AG04449 (cell line): ENCODE measurements at regions of chr7 and their contacts with region 1.

Region 1: DNA sequence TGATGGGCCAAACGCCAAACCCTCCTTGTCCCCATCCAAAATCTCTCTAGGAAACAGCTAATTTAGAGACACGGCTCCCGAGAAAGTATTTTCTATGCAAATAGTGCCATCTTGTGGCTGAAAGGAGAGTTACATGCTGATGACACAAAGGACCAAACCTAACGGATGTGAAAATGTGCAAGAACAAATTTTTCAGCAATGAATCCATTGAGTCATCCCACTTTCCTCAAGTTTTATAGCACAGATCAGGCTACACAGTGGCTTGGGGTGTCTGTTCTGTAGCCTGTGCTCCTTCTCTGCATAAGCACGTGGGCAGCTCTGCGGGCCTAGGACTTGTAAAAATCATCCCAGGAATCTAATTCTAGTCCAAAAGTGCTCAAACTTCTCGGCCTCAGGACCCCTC is 154.8 kb upstream of the PRR15 start:
- DNase-seq: peak; percentile 9
- H3K4me3 ChIP-seq: no peak overlapping the region
- CTCF ChIP-seq: peak; percentile 67

Region 2: DNA sequence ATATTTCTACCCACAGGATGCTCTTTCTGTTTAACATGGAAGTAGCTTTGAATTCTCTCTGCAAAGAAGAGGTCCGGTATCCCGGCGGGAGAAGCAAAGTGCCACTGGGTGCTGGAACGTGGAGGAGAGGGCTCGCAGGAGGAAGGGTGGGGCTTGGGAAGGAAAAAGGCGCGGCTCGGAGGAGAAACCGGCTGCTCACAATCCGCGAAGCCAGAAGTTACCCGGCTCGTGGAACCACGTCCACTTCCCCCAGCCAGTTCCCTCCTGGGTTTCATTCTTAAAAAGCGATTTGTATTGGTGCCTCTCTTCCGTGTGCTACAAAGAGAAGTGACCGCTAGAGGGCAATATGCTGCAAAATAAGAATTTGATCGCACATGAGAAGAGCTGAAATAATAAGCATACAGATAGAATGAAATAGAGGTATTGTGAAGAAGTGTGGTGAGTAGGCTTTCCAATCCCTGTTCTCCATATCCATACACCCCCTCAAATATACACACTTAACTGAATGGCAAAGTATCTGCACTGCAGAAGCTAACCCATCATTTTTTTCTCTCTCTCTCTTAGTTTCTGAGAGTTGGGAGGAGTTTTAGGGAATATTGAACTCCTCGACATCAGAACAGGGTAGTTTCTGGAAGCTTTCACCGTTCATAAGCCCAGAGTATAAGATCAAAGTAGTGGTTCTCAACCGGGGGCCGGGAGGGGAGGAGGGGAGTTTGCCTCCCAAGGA is 481.8 kb before region 1 on chr7:
- CTCF ChIA-PET with region 1: interaction called, 328 read pairs
- POLR2A ChIA-PET with region 1: no interaction called
- DNase-seq: peak; percentile 60
- H3K4me3 ChIP-seq: peak overlapping the region; percentile 72
- CTCF ChIP-seq: peak; percentile 64

Region 3: DNA sequence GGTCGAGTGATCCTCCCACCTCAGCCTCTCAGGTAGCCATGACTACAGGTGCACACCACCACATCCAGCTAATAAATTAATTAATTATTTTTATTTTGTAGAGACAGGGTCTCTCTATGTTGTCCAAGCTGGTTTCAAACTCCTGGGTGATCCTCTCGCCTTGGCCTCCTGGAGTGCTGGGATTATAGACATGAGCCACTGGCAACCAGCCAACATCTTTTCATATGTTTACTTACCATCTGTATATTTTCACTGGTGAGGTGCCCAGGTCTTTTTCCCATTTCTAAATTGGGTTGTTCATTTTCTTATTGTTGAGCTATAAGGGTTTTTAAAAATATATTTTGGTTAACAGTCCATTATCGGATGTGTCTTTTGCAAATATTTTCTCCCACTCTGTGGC is 351.8 kb before region 1 on chr7:
- CTCF ChIA-PET with region 1: no interaction called
- POLR2A ChIA-PET with region 1: no interaction called
- DNase-seq: no peak
- H3K4me3 ChIP-seq: no peak overlapping the region
- CTCF ChIP-seq: no peak

Region 4: DNA sequence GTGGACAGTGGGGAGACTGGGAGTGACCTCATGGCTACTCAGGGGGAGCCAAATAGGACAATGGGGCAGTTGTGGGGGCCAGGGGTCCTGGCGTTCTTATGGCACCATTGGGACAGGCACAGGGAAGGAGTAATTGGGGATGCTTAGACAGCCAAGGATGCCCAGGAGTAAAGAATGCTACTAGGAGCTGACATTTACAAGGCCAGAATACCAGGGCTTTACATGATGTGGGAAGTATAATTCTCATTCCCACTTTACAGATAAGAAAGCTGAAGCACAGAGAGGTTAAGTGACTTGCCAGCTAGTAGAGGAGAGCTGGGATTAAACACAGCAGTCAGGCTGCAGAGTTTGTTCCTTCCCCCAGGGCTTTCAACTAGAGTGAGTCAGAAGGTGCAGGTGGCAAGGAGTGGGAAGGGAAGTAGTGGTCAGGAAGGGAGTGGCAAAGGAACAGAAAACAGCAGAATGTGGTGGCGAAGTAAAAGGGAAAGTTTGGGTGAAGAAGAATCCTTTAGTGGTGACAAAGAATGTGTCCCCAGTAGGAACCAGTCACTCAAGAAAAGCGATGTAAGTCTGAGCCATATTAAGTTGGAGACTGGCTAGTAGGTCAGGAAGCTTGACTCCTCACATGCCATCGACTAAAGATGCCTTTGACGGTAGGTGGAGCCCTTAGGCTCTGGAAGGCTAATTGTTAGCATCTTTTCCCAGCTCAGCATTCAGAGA is 295.3 kb before region 1 on chr7:
- CTCF ChIA-PET with region 1: interaction called, 15 read pairs
- POLR2A ChIA-PET with region 1: no interaction called
- DNase-seq: no peak
- H3K4me3 ChIP-seq: no peak overlapping the region
- CTCF ChIP-seq: peak; percentile 17

Region 5: DNA sequence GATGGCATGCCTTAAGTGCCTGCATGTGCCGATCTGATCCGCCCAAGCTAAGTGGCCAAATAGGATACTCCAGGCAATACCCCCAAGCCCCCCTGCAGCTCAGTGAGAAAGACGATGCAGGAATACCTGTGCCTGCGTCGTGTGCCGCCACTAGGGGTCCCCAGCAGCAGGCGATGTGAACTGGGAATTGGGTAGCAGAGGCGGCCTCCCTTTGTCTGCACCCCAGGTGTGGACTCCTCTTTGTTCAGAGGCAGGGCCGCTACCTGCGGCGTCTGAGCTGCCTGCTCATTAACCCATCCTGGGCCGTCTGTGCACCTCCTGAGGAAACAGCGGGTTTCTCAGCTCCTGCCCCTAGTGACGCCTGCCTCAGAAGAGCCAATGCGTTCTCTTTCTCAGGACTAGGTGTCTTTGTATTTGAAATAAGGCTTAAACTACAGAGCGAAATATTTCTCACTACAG is 219.1 kb before region 1 on chr7:
- CTCF ChIA-PET with region 1: interaction called, 38 read pairs
- POLR2A ChIA-PET with region 1: no interaction called
- DNase-seq: no peak
- H3K4me3 ChIP-seq: no peak overlapping the region
- CTCF ChIP-seq: peak; percentile 75

Region 6: GRCh38 chr7:29421010-29421956 is 12.4 kb after region 1 on chr7:
- CTCF ChIA-PET with region 1: interaction called, 29 read pairs
- POLR2A ChIA-PET with region 1: no interaction called
- DNase-seq: no peak
- H3K4me3 ChIP-seq: no peak overlapping the region
- CTCF ChIP-seq: no peak

Region 7: GRCh38 chr7:29457565-29458011 is 48.7 kb after region 1 on chr7:
- CTCF ChIA-PET with region 1: interaction called, 11 read pairs
- POLR2A ChIA-PET with region 1: no interaction called
- DNase-seq: no peak
- H3K4me3 ChIP-seq: no peak overlapping the region
- CTCF ChIP-seq: no peak